PC-9 (cell line): ENCODE measurements at regions of chr2 and their contacts with region 1.

Region 1: DNA sequence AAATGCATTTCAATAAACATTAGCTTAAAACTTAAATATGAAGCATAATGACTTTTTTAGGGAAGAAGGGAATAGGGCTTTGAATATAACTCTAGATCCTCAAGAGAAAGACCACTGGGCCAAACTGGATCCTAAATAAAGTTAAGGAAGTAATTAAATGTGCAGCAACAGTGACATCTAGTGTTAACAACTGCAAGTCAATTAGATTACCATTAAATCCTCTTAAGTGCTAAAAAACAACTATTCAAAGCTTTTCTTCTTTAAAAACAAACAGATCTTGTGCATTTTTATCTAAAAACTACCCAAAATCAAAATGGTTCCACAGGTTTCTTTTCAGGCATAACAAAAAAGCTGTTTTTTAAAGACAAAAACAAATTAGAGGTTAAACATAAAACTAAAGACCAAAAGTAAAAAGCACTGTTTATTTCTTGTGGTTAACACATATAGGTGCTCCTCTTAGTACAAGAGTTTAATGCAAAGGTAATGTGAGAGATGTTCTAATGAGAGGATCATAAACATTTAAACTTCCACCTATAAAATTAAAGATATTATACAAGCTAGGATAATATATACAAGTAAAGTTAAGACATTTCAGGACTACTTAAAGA is 111.4 kb downstream of the THADA start:
- DNase-seq: peak in 1 of 2 experiments; percentile 78
- H3K4me3 ChIP-seq: no peak overlapping the region
- H3K27ac ChIP-seq: no peak overlapping the region; the same call in 1 of the 2 replicates
- H3K4me1 ChIP-seq: peaks cover 13% of the 10 kb centered on the region
- H3K27me3 ChIP-seq: no peaks in the 10 kb centered on the region
- CTCF ChIP-seq: peak; percentile 93

Region 2: DNA sequence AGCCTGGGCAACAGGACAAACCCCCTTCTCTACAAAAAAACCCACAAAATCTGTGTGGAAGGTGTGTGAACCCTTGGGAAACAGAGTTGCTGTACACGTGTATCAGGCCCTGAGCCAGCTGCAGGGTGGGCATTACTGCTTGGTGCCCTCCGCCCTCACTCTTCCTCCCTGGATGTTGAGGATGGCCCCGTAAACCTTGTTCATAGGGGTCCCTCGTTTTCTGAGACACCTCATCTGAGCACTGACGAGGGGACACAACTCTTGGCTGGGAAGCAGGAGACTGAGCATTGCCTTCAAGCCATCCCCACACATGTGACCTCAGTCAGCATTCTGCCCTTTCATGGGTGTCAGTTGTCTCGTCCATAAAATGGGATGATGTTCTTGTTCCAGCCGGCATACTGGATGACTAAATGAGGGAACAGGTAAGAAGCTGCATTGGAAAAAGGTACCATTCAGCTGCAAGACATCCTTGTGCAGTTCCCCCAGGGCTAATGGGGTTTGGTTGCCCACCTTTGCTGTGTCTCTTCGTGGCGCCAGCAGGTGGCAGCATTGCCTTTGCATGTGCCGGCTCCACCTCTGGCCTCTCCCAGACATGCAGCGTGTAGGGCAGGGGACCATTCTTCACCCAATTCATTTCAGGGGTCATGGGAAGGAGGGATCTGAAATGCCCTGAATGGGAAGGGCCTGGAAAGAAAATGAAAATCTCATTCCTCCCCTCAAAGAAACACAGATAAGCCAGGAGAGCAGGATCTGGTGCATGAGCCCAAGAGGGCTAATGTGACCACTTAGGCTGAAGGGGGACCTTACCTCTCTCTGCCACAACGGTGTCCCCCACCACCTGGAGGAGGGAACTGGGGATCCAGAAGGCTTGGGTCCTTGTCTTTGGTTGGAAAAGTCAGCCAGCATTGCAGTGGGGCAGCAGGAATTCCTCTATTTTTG is 655.7 kb before region 1 on chr2:
- CTCF ChIA-PET with region 1: interaction called, 18 read pairs
- POLR2A ChIA-PET with region 1: no interaction called
- intact Hi-C with region 1: loop called (anchors 1 kb)
- DNase-seq: peak; percentile 60 to 75
- H3K4me3 ChIP-seq: no peak overlapping the region
- H3K27ac ChIP-seq: no peak overlapping the region
- H3K4me1 ChIP-seq: 0 out of 2 replicates have a peak, but pooled peaks cover 7% of the 10 kb centered on the region
- H3K27me3 ChIP-seq: no peaks in the 10 kb centered on the region
- CTCF ChIP-seq: peak; percentile 99

Region 3: DNA sequence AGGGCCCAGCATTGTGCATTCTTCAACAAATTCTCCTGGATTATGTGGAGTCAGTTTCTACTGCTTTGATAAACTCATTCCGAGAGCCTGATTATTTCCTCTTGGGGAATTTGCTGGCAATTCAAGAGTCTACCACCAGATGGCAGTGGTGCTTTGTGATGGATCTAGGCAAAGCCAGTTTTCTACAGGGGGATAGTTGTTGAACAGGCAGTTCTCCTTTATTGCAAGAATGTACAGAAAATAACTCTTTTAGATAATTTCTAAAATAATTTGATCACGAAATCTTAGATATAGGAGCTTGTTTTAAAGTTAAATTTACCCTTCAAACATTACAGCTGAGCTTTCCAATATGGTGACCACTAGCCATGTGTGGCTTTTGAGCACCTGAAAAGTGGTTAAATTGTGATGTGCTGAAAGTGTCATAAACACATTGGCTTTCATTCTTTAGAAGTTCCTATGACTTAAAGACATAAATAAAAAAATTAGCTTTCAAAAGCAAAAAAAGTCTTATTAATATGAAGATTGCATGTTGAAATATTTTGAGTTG is 625.3 kb before region 1 on chr2:
- CTCF ChIA-PET with region 1: no interaction called
- POLR2A ChIA-PET with region 1: no interaction called
- intact Hi-C with region 1: loop called (anchors 1 kb)
- DNase-seq: peak; percentile 64 to 65
- H3K4me3 ChIP-seq: no peak overlapping the region
- H3K27ac ChIP-seq: no peak overlapping the region
- H3K4me1 ChIP-seq: no peaks in the 10 kb centered on the region
- H3K27me3 ChIP-seq: no peaks in the 10 kb centered on the region
- CTCF ChIP-seq: peak; percentile 99

Region 4: DNA sequence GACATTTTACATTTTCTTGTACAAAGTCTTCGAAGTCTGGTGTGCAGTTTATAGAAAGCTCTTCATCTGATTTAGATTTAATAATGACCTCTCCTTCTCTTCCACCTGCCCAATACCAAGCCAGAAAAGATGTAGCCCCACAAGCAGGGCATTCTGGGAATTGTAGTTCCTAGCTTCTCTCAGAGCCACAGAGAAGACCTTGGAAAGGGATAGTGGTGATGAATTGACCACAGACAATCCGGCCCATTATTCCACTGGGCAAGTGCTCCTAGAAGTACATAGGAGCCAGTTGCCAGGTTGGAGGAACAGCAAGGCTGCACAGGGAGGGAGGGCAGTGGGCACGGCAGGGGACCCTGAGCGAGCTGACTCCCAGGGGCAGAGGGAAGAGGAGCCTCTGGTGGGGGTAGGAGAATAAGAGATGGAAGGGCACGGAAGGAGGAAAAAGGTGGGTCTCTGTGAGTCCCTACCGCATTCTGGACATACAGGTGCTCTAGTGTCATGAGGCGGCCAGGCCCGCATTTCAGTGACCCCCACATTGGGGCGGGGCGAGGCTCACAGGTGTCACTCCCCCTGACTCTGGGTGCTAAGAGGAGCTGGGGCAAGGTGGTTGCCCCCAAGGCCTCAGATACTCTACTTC is 539.5 kb before region 1 on chr2:
- CTCF ChIA-PET with region 1: no interaction called
- POLR2A ChIA-PET with region 1: no interaction called
- intact Hi-C with region 1: loop called (anchors 1 kb)
- DNase-seq: no peak
- H3K4me3 ChIP-seq: no peak overlapping the region
- H3K27ac ChIP-seq: no peak overlapping the region
- H3K4me1 ChIP-seq: peaks cover 3% of the 10 kb centered on the region; the same call in 1 of the 2 replicates
- H3K27me3 ChIP-seq: no peaks in the 10 kb centered on the region
- CTCF ChIP-seq: no peak

Region 5: DNA sequence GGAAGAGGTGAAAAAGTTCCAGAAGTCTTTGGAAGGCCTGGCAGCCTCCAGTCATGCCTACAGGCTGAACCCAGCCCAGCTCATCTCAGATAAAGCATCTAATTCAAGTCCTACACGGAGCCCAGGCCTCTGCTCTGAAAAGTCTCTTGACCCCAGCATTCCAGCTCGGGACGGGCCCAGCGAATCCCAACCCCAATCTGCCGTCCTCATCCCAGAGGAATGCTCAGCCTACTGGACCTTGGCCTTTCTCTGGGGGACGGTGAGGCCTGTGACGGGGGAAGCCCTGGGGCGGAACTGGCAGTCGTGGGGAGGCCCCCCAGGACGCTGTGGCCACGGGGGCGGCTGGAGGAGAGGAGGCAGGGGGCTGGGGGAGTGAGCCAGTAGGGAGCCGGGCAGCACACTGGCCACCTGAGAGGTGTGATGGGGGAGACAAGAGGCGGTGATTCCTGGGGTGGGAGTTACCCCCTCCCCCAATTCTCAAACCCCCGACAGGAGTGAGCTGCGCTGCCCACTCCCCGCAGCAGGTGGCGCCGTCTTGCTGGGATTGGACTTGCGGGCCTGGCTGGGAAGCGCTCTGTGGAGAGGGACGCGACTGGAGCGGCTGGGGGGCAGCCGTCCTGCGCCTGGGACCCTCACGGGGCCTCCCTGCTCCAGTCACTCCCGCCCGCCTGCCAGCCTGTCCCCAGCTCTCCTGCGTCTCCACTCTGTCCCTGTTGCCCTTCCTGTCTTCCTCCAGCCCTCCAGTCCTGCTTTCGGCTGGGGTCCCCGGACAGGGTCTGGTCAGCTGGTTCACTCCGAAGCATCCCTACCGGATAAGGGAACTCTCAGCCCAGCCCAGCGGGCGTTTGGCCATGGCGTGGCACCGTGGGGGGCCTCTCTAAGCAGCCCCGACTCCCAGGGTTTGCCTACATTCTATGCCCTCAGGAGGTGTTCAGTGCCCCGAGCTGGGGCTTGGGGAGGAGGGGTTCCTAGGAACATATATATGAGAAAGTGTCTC is 509.4 kb before region 1 on chr2:
- CTCF ChIA-PET with region 1: no interaction called
- POLR2A ChIA-PET with region 1: no interaction called
- intact Hi-C with region 1: loop called (anchors 10 kb)
- DNase-seq: peak in 1 of 2 experiments; percentile 76
- H3K4me3 ChIP-seq: no peak overlapping the region
- H3K27ac ChIP-seq: no peak overlapping the region
- H3K4me1 ChIP-seq: peaks cover 16% of the 10 kb centered on the region
- H3K27me3 ChIP-seq: no peaks in the 10 kb centered on the region
- CTCF ChIP-seq: peak; percentile 97

Region 6: DNA sequence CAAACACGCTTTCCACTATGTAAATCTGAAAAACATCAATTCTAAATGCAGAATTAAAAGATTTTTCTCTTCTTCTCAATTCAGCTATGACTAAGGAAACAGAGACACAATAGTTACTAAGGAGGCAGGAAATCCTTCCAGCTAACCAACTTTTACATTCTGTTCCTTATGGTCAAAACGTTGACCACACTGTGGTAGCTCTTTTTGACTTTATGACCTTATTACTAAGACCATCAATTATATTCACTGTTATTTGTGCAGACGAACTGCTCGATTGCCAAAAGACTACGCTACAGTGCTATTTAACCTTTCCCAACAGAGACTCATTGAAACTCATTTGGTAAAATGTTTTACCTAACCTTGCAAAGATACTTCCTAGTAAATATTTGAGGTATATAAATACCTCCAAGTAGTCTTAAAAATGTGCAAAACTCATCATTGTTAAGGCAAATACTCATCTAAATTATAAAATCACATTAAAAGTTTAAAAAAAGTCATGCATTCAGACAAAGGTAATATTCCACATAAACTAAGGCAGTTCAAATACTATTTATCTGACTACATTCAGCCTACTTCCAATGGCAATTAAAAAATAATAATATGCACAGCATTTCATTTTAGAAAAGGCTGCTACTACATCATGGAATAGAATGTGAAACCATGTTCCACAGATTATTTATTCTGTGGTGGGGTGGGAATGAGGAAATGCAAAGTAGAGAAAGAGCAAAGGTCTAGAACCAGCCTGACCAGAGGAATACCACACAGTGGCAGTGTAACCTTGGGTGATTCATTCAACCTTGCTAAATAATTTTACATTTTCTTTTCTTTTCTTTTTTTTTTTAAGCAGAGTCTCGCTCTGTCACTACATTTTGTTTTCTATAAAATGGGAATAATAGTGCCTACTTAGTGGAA is 28.4 kb before region 1 on chr2:
- CTCF ChIA-PET with region 1: interaction called, 3 read pairs
- POLR2A ChIA-PET with region 1: no interaction called
- intact Hi-C with region 1: loop called (anchors 1 kb)
- DNase-seq: peak; percentile 30 to 95
- H3K4me3 ChIP-seq: peak overlapping the region; percentile 25; the same call in 1 of the 2 replicates
- H3K27ac ChIP-seq: peak overlapping the region; percentile 78
- H3K4me1 ChIP-seq: peaks cover 80% of the 10 kb centered on the region
- H3K27me3 ChIP-seq: no peaks in the 10 kb centered on the region
- CTCF ChIP-seq: peak; percentile 37; the same call in 1 of the 2 replicates

Region 7: GRCh38 chr2:43519643-43520221 is 35.3 kb after region 1 on chr2:
- CTCF ChIA-PET with region 1: no interaction called
- POLR2A ChIA-PET with region 1: no interaction called
- intact Hi-C with region 1: no loop called
- DNase-seq: peak; percentile 15 to 83
- H3K4me3 ChIP-seq: no peak overlapping the region
- H3K27ac ChIP-seq: peak overlapping the region; percentile 67
- H3K4me1 ChIP-seq: peaks cover 11% of the 10 kb centered on the region
- H3K27me3 ChIP-seq: no peaks in the 10 kb centered on the region
- CTCF ChIP-seq: no peak

Region 8: GRCh38 chr2:43537137-43537536 is 52.7 kb after region 1 on chr2:
- CTCF ChIA-PET with region 1: interaction called, 3 read pairs
- POLR2A ChIA-PET with region 1: no interaction called
- intact Hi-C with region 1: loop called (anchors 5 kb)
- DNase-seq: no peak
- H3K4me3 ChIP-seq: no peak overlapping the region
- H3K27ac ChIP-seq: no peak overlapping the region
- H3K4me1 ChIP-seq: no peaks in the 10 kb centered on the region
- H3K27me3 ChIP-seq: no peaks in the 10 kb centered on the region
- CTCF ChIP-seq: no peak